Ovary (tissue), 10 donors: ENCODE measurements at regions of chr7 and their contacts with region 1.

Region 1: DNA sequence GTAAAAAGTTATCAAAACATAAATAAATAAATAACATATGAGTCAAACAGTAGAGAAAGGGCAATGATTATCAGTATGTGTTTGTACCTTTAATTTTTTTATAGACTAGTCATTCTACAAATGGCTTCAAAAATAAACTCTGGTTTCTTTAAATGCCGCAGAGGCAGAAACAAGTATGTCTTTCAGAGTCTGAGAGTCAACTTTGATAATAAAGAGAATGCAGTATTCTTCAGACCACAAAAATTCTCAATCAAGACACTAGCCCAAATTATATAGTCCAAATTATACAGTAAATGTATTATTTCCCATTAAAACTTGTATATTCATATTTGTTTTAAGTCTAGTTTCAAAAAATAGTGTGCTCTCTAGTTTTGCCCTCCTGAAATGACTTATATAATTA is 1142.3 kb downstream of the NXPH1 start:
- DNase-seq: no peak
- H3K4me3 ChIP-seq: no peak overlapping the region
- H3K27ac ChIP-seq: no peak overlapping the region
- H3K4me1 ChIP-seq: no peaks in the 10 kb centered on the region
- H3K27me3 ChIP-seq: peaks cover 5% of the 10 kb centered on the region
- CTCF ChIP-seq: no peak
- EP300 ChIP-seq: no peak
- POLR2A ChIP-seq: no peak

Region 2: DNA sequence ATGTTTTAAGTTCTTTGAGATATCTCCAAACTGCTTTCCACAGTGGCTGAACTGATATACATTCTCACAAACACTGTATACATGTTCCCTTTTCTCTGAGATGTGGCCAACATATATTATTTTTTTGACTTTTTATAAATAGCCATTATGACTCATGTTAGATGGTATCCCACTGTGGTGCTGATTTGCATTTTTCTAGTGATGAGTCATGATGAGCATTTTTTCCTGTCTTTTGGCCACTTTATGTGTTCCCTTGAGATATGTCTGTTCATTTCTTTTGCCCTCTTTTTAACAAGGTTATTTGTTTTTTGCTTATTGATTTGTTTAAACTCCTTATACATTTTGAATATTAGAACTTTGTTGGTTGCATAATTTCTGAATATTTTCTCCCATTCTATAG is 87.2 kb before region 1 on chr7:
- intact Hi-C with region 1: loop called in 1 of 4 experiments (anchors 5 kb)
- DNase-seq: no peak
- H3K4me3 ChIP-seq: no peak overlapping the region
- H3K27ac ChIP-seq: no peak overlapping the region
- H3K4me1 ChIP-seq: no peaks in the 10 kb centered on the region
- H3K27me3 ChIP-seq: no peaks in the 10 kb centered on the region
- CTCF ChIP-seq: no peak
- EP300 ChIP-seq: no peak
- POLR2A ChIP-seq: no peak